Activated CD4-positive, alpha-beta T cell treated with anti-CD3 and anti-CD28 coated beads, Interleukin-2, amount 10 ng/mL, durations not matched to agents 24 days and 14 days (primary cell): ENCODE measurements at regions of chr2 and their contacts with region 1.

Region 1: DNA sequence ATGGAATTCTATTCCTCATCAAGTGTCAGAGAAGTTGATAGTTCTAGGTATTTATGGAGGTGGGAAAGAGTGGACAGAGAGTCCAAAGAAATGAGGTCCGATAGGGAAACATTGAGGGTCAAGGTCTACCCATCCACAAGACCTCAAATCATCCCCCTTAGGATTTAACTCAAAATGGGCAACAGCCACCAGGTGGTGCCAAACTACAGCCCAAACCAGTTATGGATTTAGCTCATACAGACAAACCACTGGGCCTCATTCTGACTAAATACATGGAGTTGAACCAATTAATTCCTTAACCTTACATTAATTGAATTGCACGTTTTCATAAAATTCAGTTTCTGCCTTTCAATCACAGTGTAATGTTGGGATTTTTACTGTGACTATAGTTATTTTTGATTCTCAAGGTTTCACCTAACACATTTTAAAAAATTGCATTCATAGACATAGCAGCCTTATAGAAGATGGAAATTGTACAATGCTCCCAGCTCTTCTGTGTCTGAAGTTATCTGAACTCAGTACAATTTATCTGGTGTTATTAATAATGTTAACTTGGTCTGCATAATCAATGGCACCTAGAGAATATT is 98.2 kb upstream of the HNMT start:
- DNase-seq: peak; percentile 76
- H3K4me3 Mint-ChIP-seq: no peak overlapping the region
- H3K27ac Mint-ChIP-seq: no peak overlapping the region
- H3K4me1 Mint-ChIP-seq: no peaks in the 10 kb centered on the region
- H3K27me3 Mint-ChIP-seq: no peaks in the 10 kb centered on the region

Region 2: DNA sequence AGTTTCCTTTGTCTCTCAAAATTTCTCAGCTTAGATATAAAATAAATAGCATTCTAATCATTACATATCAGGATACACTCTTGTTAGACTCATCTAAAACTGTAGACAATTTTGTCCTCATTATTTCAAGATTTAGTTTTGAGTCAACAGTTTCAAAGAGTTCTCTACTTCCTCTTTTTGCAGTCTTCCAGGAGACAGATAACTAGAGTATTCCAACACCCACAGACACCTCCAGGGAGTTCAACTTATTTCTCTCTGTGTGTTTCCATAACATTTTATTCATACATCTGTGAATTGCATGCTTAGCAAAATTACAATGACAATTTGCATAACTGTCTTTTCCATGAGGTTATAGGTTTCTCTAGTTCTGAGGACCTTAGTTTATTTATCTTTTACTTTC is 68.4 kb before region 1 on chr2:
- intact Hi-C with region 1: no loop called
- DNase-seq: no peak
- H3K4me3 Mint-ChIP-seq: no peak overlapping the region
- H3K27ac Mint-ChIP-seq: no peak overlapping the region
- H3K4me1 Mint-ChIP-seq: no peaks in the 10 kb centered on the region
- H3K27me3 Mint-ChIP-seq: no peaks in the 10 kb centered on the region

Region 3: DNA sequence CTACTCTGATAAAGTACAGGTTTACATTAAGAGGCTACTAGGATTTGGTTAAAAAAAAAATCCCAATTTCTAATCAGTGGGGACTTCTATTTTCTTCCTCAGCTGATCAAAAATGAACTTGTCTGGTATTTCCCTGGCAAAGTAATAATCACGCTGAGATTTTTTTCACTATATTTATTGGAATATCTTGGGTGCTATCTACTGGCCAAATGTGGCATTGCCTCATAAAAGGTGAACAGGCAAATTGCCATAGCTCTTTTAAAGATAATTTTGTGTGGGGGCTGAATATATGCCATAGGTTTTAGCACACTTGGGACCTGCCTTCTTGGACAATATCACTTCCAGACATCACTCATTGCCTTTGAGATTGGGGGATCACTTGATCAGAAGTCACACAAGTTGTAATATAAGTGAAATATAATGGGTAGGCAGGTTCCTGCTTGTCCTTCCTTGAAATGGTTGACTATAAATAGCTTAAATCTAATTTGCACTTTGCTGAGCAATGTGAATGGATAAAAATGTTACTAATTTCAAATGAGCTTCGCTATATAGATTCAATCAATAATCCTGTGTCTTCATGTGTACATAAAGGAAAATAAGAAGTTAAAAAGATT is 921.1 kb after region 1 on chr2:
- intact Hi-C with region 1: loop called (anchors 5 kb)
- DNase-seq: no peak
- H3K4me3 Mint-ChIP-seq: no peak overlapping the region
- H3K27ac Mint-ChIP-seq: no peak overlapping the region
- H3K4me1 Mint-ChIP-seq: no peaks in the 10 kb centered on the region
- H3K27me3 Mint-ChIP-seq: peaks cover 20% of the 10 kb centered on the region